A549 (cell line): ENCODE measurements at regions of chr15 and their contacts with region 1.

Region 1: GRCh38 chr15:75201609-75202250 is at the start of gene C15orf39:
- DNase-seq: peak; percentile 79 to 92
- ATAC-seq: peak; percentile 67 to 75
- H3K4me3 ChIP-seq: peak within 1 kb of the TSS; percentile 84
- H3K27ac ChIP-seq: peak within 1 kb of the TSS; percentile 92 to 93
- H3K4me1 ChIP-seq: peaks cover 32% of the 10 kb centered on the region
- CTCF ChIP-seq: peak; percentile 98
- EP300 ChIP-seq: no peak
- POLR2A ChIP-seq: peak; percentile 94
- RAD21 ChIP-seq: peak; percentile 51 to 78; a peak in 4 of 5 replicates
- polyA plus RNA-seq, gene C15orf39: 5.7 and 8.8 TPM in 2 replicates

Region 2: DNA sequence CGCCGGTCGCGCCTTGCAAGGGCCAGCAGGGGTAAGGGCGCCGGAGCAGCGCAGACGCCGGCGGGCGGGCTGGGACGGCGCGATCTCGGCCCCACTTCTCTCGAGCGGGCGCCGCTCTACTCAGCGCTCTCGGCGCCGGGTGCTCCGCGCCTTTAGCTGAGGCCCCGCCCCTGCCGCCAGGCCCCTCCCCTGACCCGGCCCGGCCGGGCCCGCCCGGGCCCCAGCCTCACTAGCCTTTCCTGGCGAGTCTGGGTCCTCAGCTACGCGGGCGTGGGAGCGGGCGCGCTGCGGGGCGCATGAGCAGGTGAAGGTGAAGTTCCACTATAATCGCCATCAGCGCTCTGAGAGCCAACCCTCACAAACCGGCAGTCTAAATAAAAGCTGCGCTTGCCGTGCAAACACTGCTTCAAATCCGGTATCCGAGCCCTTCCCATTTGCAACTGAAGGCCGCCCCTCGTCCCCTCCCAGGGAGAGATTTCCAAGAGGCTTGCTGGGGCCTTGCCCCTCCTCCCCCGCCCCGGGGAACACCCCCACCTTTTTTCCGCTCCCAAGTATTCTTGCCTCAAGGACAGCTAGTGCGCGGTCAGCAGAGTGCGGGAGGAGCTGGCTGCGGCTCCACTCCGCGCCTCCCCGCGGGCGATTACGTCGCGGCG is 245.0 kb before region 1 on chr15 and contains the start of gene RPP25:
- CTCF ChIA-PET with region 1: interaction called, 6 read pairs
- POLR2A ChIA-PET with region 1: interaction called, 11 read pairs
- DNase-seq: peak; percentile 86 to 94
- ATAC-seq: peak; percentile 87 to 93
- H3K4me3 ChIP-seq: peak within 1 kb of the TSS; percentile 53
- H3K27ac ChIP-seq: peak within 1 kb of the TSS; percentile 82 to 92
- H3K4me1 ChIP-seq: peaks cover 44% of the 10 kb centered on the region
- CTCF ChIP-seq: no peak
- EP300 ChIP-seq: no peak
- POLR2A ChIP-seq: peak; percentile 95
- RAD21 ChIP-seq: 0 out of 5 replicates have a peak, but pooled peaks have one; percentile 2 to 9
- polyA plus RNA-seq, gene RPP25: 8.8 and 9.3 TPM in 2 replicates

Region 3: DNA sequence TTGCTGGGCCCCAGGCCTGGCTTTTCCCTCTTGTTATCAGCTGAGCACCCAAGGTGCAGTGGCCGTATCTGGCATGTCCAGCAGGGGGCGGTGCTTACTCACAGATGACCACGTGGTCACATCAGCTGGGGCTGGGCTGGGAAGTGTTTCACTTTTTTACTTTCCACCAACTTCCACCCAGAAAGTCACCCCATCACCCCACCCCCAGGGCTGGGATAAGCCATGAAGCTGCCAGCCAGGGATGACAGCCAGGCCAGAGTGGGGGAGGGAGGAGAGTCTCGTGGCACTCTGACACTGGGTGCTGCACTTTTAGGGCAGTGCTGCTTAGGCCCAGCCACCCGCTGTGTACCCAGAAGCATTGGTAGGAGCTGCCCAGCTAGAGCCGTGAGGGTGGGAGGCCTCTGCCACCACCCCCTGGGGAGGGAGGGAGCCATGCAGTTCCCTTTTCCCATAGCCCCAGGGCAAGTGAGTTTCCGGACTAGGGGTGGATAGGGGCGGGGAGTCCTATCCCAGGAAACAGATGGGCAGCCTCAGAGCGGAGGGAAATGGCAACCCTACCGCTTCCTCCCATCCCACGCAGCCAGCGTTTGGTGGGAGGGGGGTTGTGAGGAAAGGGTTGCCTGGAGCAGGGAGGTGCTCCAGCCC is 172.2 kb before region 1 on chr15:
- CTCF ChIA-PET with region 1: interaction called, 324 read pairs
- POLR2A ChIA-PET with region 1: interaction called, 15 read pairs
- DNase-seq: peak; percentile 87 to 94
- ATAC-seq: peak; percentile 92 to 96
- H3K4me3 ChIP-seq: no peak overlapping the region
- H3K27ac ChIP-seq: peak overlapping the region; percentile 70 to 82
- H3K4me1 ChIP-seq: peaks cover 25% of the 10 kb centered on the region
- CTCF ChIP-seq: peak; percentile 98
- EP300 ChIP-seq: no peak
- POLR2A ChIP-seq: no peak
- RAD21 ChIP-seq: peak; percentile 98 to 99

Region 4: GRCh38 chr15:75042730-75043508 is 158.8 kb before region 1 on chr15:
- CTCF ChIA-PET with region 1: interaction called, 25 read pairs
- POLR2A ChIA-PET with region 1: interaction called, 7 read pairs
- DNase-seq: peak; percentile 57 to 76
- ATAC-seq: peak; percentile 82 to 87
- H3K4me3 ChIP-seq: no peak overlapping the region
- H3K27ac ChIP-seq: peak overlapping the region; percentile 34 to 69
- H3K4me1 ChIP-seq: peaks cover 33% of the 10 kb centered on the region
- CTCF ChIP-seq: peak; percentile 58
- EP300 ChIP-seq: no peak
- POLR2A ChIP-seq: no peak
- RAD21 ChIP-seq: peak; percentile 80 to 83

Region 5: GRCh38 chr15:75149867-75150709 is 51.6 kb before region 1 on chr15:
- CTCF ChIA-PET with region 1: interaction called, 17 read pairs
- POLR2A ChIA-PET with region 1: interaction called, 14 read pairs
- DNase-seq: peak in 1 of 2 experiments; percentile 79
- ATAC-seq: peak in 1 of 2 experiments; percentile 63; a peak in 3 of 6 replicates
- H3K4me3 ChIP-seq: no peak overlapping the region
- H3K27ac ChIP-seq: peak overlapping the region; percentile 30 to 40; a peak in 3 of 6 replicates
- H3K4me1 ChIP-seq: peaks cover 24% of the 10 kb centered on the region
- CTCF ChIP-seq: no peak
- EP300 ChIP-seq: no peak
- POLR2A ChIP-seq: no peak
- RAD21 ChIP-seq: no peak

Region 6: GRCh38 chr15:75215107-75216004 is 13.6 kb after region 1 on chr15:
- CTCF ChIA-PET with region 1: interaction called, 52 read pairs
- POLR2A ChIA-PET with region 1: no interaction called
- DNase-seq: no peak
- ATAC-seq: peak; percentile 22 to 48; a peak in 4 of 6 replicates
- H3K4me3 ChIP-seq: no peak overlapping the region
- H3K27ac ChIP-seq: no peak overlapping the region
- H3K4me1 ChIP-seq: no peaks in the 10 kb centered on the region
- CTCF ChIP-seq: no peak
- EP300 ChIP-seq: no peak
- POLR2A ChIP-seq: no peak
- RAD21 ChIP-seq: no peak

Region 7: GRCh38 chr15:75237316-75237982 is 35.7 kb after region 1 on chr15:
- CTCF ChIA-PET with region 1: no interaction called
- POLR2A ChIA-PET with region 1: no interaction called
- DNase-seq: no peak
- ATAC-seq: no peak
- H3K4me3 ChIP-seq: no peak overlapping the region
- H3K27ac ChIP-seq: no peak overlapping the region
- H3K4me1 ChIP-seq: no peaks in the 10 kb centered on the region
- CTCF ChIP-seq: no peak
- EP300 ChIP-seq: no peak
- POLR2A ChIP-seq: no peak
- RAD21 ChIP-seq: no peak

Region 8: DNA sequence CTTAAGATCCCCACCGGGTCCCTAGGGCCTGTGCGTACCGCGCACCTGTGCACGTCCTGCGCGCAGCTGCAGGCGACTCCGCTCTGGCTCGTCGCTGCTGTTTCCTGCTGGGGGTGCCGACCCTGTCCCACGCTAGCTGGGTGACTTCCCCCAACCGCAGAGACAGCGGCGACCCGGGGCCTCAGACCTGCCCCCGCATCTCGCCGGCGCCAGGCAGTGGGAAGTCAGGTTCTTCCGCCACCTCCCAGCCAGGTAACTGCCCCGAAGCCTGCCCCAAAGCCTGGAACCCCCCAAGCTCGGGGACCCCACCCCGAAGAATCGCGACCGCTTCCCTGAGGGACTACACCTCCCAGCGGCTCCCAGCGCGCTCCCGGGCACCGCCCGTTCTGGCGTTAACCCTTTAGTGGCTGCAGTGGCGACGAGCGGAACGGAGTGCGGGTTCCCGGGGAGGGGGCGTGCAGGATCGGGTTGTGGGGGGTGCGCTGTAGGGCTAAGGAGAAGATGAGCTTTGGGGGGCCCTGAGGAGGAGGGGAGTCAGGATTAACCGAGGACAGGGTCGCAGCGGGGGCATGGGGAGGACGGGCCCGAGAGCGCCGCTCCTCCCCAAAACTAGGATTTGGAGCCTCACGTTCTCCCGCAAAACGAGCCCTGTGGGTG is 145.6 kb after region 1 on chr15:
- CTCF ChIA-PET with region 1: no interaction called
- POLR2A ChIA-PET with region 1: no interaction called
- DNase-seq: peak in 1 of 2 experiments; percentile 55
- ATAC-seq: peak; percentile 28 to 62; a peak in 5 of 6 replicates
- H3K4me3 ChIP-seq: peak overlapping the region; percentile 91
- H3K27ac ChIP-seq: peak overlapping the region; percentile 95 to 96
- H3K4me1 ChIP-seq: peaks cover 4% of the 10 kb centered on the region; the same call in 1 of the 3 replicates
- CTCF ChIP-seq: no peak
- EP300 ChIP-seq: no peak
- POLR2A ChIP-seq: no peak
- RAD21 ChIP-seq: no peak

Region 9: DNA sequence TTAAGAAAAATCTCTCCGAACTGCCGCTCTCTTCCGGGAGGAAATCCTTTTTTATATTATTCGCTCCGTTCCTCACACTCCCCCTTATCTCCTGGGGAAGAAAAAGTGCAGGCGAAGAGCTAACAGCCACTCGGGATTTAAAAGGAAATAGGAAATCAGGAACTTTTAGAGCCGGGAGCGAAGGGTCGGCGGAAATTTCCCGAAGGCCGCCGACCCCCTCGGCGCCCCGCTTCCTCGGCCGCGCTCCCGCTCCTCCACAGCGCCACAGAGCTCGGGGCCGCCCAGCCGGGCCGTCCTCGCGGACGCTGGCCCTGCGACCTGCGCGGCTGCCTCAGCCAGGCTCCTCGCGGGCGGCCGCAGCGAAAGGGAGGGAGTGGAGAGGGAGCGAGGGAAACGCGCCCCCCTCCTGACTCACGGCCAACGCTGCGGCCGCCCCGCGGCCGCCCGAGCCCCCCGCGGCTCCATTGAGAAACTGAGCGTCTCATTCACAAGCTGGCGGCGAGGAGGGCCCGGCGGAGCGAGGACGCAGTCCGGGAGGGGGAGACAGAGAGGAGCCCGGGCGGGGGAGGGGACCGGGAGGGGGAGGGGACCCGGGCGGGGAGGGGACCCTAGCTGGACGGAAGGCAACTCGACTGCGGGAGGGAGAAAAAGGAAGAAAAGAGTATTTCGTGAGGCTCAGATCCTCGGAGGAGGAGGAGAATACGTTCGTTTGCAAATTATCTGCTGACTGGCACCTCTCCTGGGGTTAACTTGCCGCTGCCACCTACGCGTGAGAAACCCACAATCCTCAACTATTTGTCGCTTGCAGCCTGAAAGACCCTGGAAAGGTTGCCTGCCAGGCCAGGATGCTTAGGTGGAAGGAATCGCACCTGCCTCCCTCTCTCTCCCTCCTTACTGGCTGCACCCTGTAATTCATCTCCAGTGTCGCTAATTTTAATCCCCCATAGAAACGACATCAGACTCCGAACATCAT is 377.5 kb after region 1 on chr15 and contains the start of gene PTPN9:
- CTCF ChIA-PET with region 1: no interaction called
- POLR2A ChIA-PET with region 1: no interaction called
- DNase-seq: peak; percentile 77 to 82
- ATAC-seq: peak; percentile 88 to 90
- H3K4me3 ChIP-seq: peak within 1 kb of the TSS; percentile 67
- H3K27ac ChIP-seq: peak within 1 kb of the TSS; percentile 96 to 97
- H3K4me1 ChIP-seq: peaks cover 16% of the 10 kb centered on the region
- CTCF ChIP-seq: peak; percentile 65
- EP300 ChIP-seq: no peak
- POLR2A ChIP-seq: peak; percentile 62
- RAD21 ChIP-seq: peak in 1 of 2 experiments; percentile 59; a peak in 3 of 5 replicates
- polyA plus RNA-seq, gene PTPN9: 60.2 and 71.2 TPM in 2 replicates